Heart right ventricle (tissue), 16 donors: ENCODE measurements at regions of chr18 and their contacts with region 1.

Region 1: DNA sequence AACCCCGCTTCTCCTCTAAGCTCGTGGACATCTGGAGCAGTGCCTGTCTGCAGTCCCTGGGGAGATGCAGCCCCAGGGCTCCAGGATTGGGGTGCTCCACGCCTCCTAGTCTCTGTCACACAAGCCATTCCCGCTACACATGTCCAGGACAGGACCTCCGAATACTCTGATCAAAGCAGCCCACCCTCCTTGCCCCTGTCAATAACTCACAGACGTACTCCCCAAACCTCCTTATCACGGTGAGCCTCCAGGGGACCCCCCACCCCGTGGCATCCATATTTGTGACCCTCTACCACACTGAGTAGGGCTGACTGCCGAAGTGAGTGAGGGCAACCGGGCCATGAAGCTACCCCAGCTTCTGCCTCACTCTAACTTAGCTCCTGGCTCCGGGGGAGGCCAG is 727.7 kb downstream of the GALR1 start:
- DNase-seq: no peak
- ATAC-seq: no peak
- H3K4me3 ChIP-seq: no peak overlapping the region
- H3K27ac ChIP-seq: no peak overlapping the region
- H3K4me1 ChIP-seq: no peaks in the 10 kb centered on the region
- H3K27me3 ChIP-seq: no peaks in the 10 kb centered on the region
- CTCF ChIP-seq: no peak

Region 2: DNA sequence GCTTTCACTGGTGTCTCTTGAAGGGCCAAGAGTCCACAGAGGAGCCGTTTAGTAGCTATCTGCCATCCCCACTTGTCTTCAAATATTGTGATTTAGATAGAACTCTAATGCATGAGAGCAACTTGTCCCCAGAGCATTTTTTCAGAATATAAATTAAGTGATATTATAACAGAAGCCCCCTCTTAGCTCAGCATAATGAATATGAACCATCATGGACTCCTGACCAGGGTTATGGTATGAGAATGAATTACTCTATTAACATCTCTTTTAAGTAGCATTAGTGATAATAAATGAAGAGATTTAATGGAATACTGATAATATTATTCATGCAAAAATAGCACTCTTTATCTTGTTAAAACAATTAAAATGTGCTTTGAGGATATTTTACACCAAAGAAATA is 18.1 kb before region 1 on chr18:
- intact Hi-C with region 1: loop called in 1 of 10 experiments (anchors 2 kb)
- DNase-seq: no peak
- ATAC-seq: no peak
- H3K4me3 ChIP-seq: no peak overlapping the region
- H3K27ac ChIP-seq: no peak overlapping the region
- H3K4me1 ChIP-seq: no peaks in the 10 kb centered on the region
- H3K27me3 ChIP-seq: peaks cover 0 to 6% (median 0%) of the 10 kb centered on the region in 7 donors
- CTCF ChIP-seq: no peak